AG04450 (cell line): ENCODE measurements at regions of chr3 and their contacts with region 1.

Region 1: DNA sequence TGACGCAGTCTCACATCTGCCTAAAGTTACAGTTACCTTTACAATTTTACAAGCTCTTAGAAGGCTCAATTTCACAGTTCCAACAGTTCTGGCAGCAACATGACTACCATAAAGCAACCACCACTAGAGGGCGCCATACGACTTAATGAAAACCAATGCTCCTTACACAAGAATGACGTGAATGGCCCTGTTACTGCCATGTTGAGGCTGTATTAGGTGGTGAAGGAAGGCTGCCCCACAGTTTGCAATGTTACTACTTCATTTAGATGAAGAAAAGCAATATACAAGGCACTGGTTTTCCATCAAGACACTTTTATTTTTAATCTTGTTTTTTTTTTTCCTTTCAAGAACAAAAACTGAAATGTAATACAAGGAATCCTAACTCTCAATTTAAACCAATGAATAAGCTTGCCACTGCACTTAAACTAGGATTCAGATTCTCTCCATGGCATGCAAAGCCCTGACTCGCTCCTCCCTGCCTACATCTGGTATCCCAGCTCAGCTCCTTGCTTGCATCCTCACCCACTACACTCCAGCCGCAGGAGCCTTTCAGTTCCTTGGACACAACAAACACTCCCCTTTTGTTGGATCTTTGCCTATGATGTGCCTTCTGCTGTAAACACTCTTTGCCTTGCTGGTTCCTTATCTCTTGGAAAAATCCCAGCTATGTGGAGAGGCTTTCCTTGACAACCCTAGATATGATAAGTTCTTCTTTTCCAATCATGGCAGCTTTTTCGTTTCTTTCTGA is 270.7 kb downstream of the GBE1 start:
- DNase-seq: peak; percentile 72
- H3K4me3 ChIP-seq: no peak overlapping the region
- H3K27ac ChIP-seq: no peak overlapping the region
- H3K27me3 ChIP-seq: no peaks in the 10 kb centered on the region
- CTCF ChIP-seq: peak; percentile 77

Region 2: GRCh38 chr3:81476692-81477091 is 14.0 kb before region 1 on chr3:
- CTCF ChIA-PET with region 1: interaction called, 27 read pairs
- POLR2A ChIA-PET with region 1: no interaction called
- DNase-seq: no peak
- H3K4me3 ChIP-seq: no peak overlapping the region
- H3K27ac ChIP-seq: no peak overlapping the region
- H3K27me3 ChIP-seq: no peaks in the 10 kb centered on the region
- CTCF ChIP-seq: no peak

Region 3: GRCh38 chr3:81531263-81531662 is 40.5 kb after region 1 on chr3:
- CTCF ChIA-PET with region 1: interaction called, 11 read pairs
- POLR2A ChIA-PET with region 1: no interaction called
- DNase-seq: no peak
- H3K4me3 ChIP-seq: no peak overlapping the region
- H3K27ac ChIP-seq: no peak overlapping the region
- H3K27me3 ChIP-seq: no peaks in the 10 kb centered on the region
- CTCF ChIP-seq: no peak

Region 4: GRCh38 chr3:81643721-81644120 is 153.0 kb after region 1 on chr3:
- CTCF ChIA-PET with region 1: interaction called, 30 read pairs
- POLR2A ChIA-PET with region 1: no interaction called
- DNase-seq: no peak
- H3K4me3 ChIP-seq: no peak overlapping the region
- H3K27ac ChIP-seq: no peak overlapping the region
- H3K27me3 ChIP-seq: no peaks in the 10 kb centered on the region
- CTCF ChIP-seq: peak; percentile 47